ENCODE measurements at regions of chr15 and their contacts with region 1.

Region 1: DNA sequence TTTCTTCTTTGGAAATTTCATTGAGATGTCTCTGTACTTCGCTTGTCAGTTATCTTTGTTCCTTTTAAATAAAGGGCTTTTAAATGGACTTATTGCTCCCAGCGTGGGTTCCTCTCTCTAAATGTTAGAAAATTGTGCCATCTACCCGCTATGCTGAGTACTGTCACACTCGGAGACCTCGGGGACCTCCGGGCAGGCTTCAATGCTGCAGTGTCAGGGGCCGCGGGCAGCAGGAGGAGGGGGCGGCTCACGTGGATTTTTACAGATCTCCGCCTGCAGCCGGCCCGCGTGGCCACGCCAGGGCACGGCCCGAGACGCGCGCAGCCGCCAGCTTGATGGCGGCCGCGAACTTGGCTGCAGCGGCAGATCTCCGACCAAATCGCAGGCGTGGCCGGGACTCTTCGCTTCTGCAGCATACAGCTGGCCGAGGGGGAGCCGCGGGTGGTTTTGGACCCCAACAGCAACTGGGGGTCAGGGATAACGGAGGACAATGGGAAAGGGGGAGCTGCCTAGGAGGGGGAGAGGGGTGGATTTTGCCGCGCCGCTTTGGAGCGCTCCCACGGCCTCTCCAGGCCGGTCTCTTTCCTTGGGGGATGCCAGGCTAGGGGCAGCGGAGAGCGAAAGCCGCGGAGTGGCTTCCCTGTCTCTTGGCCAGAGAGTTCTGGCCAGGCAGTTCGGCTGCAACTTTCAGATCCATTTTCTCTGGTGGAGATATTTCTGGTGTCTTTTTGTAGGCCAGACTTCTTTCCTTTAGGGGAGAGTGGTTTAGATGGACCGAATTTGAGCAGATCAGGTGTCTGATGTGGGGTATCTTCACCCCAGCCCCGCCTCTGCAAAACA is 15.3 kb downstream of the NR2F2 start:
- DNase-seq: peak; percentile 86
- H3K4me3 ChIP-seq: peak overlapping the region; percentile 16 to 99 (median 74)
- H3K27ac ChIP-seq: peak overlapping the region; percentile 87
- H3K4me1 ChIP-seq: peaks cover 83% of the 10 kb centered on the region
- H3K27me3 ChIP-seq: no peaks in the 10 kb centered on the region
- CTCF ChIP-seq: peak; percentile 22 to 33
- POLR2A ChIP-seq: no peak

Region 2: GRCh38 chr15:94412979-94413746 is 1932.6 kb before region 1 on chr15:
- CTCF ChIA-PET with region 1: no interaction called
- POLR2A ChIA-PET with region 1: no interaction called
- dilution Hi-C with region 1: no loop called
- intact Hi-C with region 1: loop called (anchors 5 kb)
- DNase-seq: peak; percentile 47
- H3K4me3 ChIP-seq: no peak overlapping the region
- H3K27ac ChIP-seq: no peak overlapping the region
- H3K4me1 ChIP-seq: no peaks in the 10 kb centered on the region
- H3K27me3 ChIP-seq: no peaks in the 10 kb centered on the region
- CTCF ChIP-seq: peak in 1 of 2 donors; percentile 20
- POLR2A ChIP-seq: no peak

Region 3: DNA sequence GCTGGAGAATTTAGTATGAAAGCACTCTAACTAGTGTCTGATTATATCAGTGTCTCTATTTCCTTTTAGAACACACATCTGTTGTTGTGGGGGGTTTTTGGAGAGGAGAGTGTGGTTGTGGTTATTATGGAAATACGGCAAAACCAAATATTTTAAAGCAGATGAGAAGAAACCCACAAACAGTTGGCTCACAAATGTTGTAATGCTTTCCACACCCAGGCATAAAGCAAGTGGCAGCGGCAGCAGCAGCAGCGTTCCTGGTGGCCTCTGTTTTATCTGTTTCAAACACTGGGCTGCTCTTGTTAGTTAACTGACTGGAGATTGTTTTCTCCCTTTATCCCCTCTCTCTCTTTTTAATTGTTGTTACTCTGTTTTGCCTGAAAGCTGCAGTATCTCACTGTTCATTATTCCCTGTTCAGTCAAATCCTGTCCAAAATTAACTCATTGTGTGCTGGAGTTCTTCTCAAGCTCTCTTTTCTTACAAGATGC is 1060.8 kb before region 1 on chr15:
- CTCF ChIA-PET with region 1: interaction called, 3 read pairs
- POLR2A ChIA-PET with region 1: no interaction called
- dilution Hi-C with region 1: no loop called
- intact Hi-C with region 1: loop called (anchors 1 kb)
- DNase-seq: peak; percentile 88
- H3K4me3 ChIP-seq: no peak overlapping the region
- H3K27ac ChIP-seq: peak overlapping the region; percentile 15
- H3K4me1 ChIP-seq: peaks cover 63% of the 10 kb centered on the region
- H3K27me3 ChIP-seq: no peaks in the 10 kb centered on the region
- CTCF ChIP-seq: peak; percentile 21 to 28
- POLR2A ChIP-seq: no peak

Region 4: GRCh38 chr15:95459273-95459672 is 886.5 kb before region 1 on chr15:
- CTCF ChIA-PET with region 1: no interaction called
- POLR2A ChIA-PET with region 1: no interaction called
- dilution Hi-C with region 1: no loop called
- intact Hi-C with region 1: loop called (anchors 5 kb)
- DNase-seq: peak; percentile 90
- H3K4me3 ChIP-seq: peak overlapping the region in 1 of 3 experiments; percentile 51
- H3K27ac ChIP-seq: peak overlapping the region; percentile 85
- H3K4me1 ChIP-seq: peaks cover 41% of the 10 kb centered on the region
- H3K27me3 ChIP-seq: no peaks in the 10 kb centered on the region
- CTCF ChIP-seq: no peak
- POLR2A ChIP-seq: peak; percentile 65